ENCODE measurements at regions of chr20 and their contacts with region 1.

Region 1: DNA sequence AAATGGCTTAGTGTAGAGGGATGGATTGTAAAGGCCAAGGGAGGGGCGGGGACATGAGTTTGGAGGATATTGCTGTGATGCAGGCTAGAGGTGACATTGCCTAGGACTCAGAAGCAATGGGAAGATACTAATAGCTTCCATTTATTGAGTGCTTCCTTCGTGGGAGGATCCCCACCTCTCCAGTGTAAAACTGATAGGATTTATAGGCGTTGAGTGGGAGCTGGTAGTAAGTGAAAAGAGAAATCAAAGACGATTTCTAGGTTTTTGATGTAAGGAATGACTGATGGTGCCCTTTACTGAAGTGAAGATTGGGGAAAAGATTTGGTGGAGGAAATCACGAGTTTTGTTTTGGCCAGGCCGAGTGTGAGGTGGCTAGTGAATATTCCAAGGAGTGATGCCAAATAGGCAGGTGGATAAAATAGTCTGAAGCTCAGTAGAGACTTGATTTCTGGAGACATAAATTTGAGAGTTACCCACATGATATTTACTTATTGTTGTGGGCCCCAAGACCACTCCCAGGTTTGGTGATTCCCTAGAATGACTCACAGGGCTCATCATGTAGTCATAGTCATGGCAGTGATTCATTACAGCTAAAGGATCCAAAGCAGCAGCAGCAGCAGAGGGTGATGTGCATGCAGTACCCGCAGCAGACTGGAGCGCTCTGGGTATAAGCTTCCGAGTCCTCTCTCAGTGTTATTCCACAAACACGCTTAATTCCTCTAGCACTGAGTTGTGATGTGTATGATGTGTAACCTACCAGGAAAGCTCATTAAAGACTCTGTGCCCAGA is 10.2 kb downstream of the RPRD1B start:
- DNase-seq: peak; percentile 85
- H3K4me3 Mint-ChIP-seq: no peak overlapping the region
- H3K27ac Mint-ChIP-seq: peak overlapping the region; percentile 88
- H3K4me1 Mint-ChIP-seq: peaks cover 19% of the 10 kb centered on the region
- H3K27me3 Mint-ChIP-seq: no peaks in the 10 kb centered on the region
- CTCF ChIP-seq: no peak

Region 2: GRCh38 chr20:37990571-37991151 is 53.0 kb before region 1 on chr20:
- CTCF ChIA-PET with region 1: interaction called, 6 read pairs
- POLR2A ChIA-PET with region 1: interaction called, 11 read pairs
- intact Hi-C with region 1: no loop called
- DNase-seq: peak; percentile 50
- H3K4me3 Mint-ChIP-seq: peak overlapping the region; percentile 40
- H3K27ac Mint-ChIP-seq: peak overlapping the region; percentile 83
- H3K4me1 Mint-ChIP-seq: peaks cover 76% of the 10 kb centered on the region
- H3K27me3 Mint-ChIP-seq: no peaks in the 10 kb centered on the region
- CTCF ChIP-seq: no peak

Measured in MCF 10A (cell line).